ENCODE measurements at regions of chr4 and their contacts with region 1.

Region 1: GRCh38 chr4:162497564-162498167 is 333.9 kb upstream of the FSTL5 start:
- DNase-seq: peak; percentile 68
- H3K4me3 Mint-ChIP-seq: no peak overlapping the region
- H3K27ac Mint-ChIP-seq: no peak overlapping the region
- H3K4me1 Mint-ChIP-seq: no peaks in the 10 kb centered on the region
- H3K27me3 Mint-ChIP-seq: no peaks in the 10 kb centered on the region

Region 2: DNA sequence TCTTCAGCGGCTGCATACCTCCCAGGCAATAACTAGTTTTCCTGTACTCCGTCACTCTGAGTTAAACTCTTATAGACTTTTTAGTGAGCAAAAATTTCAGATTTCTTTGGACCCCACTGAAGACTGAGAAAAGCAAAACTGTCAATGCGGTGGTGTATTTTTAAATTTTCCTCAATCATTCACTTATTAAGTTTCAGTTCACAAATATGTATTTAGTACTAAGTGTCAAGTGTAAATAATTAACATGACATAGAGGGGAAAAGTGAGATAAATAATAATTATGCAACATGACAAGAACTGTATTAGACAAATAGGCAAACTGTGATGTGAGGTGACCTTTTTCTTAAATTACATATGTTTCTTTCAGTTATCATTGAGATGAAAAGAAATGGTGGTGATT is 544.6 kb after region 1 on chr4:
- intact Hi-C with region 1: loop called (anchors 2 kb)
- DNase-seq: no peak
- H3K4me3 Mint-ChIP-seq: no peak overlapping the region
- H3K27ac Mint-ChIP-seq: no peak overlapping the region
- H3K4me1 Mint-ChIP-seq: no peaks in the 10 kb centered on the region
- H3K27me3 Mint-ChIP-seq: peaks cover 2% of the 10 kb centered on the region

Region 3: GRCh38 chr4:163332500-163333406 is 835.1 kb after region 1 on chr4 and contains the start of gene NPY1R:
- intact Hi-C with region 1: loop called (anchors 1 kb)
- DNase-seq: peak; percentile 77
- H3K4me3 Mint-ChIP-seq: peak within 1 kb of the TSS; percentile 72
- H3K27ac Mint-ChIP-seq: no peak within 1 kb of the TSS
- H3K4me1 Mint-ChIP-seq: peaks cover 12% of the 10 kb centered on the region
- H3K27me3 Mint-ChIP-seq: peaks cover 49% of the 10 kb centered on the region
- total RNA-seq, gene NPY1R: not detected in 2 replicates

Region 4: GRCh38 chr4:163484906-163485305 is 987.2 kb after region 1 on chr4:
- intact Hi-C with region 1: loop called (anchors 10 kb)
- DNase-seq: peak; percentile 87
- H3K4me3 Mint-ChIP-seq: no peak overlapping the region
- H3K27ac Mint-ChIP-seq: no peak overlapping the region
- H3K4me1 Mint-ChIP-seq: peaks cover 4% of the 10 kb centered on the region
- H3K27me3 Mint-ChIP-seq: peaks cover 28% of the 10 kb centered on the region

Region 5: DNA sequence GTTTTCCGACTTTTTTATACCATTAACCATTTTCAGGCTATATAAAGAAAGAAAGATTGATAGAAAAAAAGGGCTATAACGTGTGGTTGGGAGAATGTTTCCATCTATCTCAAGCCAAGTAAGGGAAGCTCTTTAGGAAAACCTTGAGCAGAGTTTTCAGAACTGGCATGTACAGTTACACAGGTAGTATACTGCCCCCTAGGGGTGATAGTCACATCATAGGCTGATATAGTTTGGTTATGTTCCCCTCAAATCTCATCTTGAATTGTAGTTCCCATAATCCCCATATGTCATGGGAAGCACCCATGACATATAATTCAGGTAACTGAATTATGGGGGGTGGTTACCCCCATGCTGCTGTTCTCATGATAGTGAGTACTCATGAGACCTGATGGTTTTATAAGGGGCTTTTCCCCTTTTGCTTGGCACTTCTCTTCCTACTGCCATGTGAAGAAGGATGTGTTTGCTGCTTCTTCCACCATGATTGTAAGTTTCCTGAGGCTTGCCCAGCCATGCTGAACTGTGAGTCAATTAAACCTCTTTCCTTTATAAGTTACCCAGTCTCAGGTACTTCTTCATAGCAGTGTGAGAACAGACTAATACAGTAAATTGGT is 1183.6 kb after region 1 on chr4:
- intact Hi-C with region 1: loop called (anchors 5 kb)
- DNase-seq: peak; percentile 79
- H3K4me3 Mint-ChIP-seq: no peak overlapping the region
- H3K27ac Mint-ChIP-seq: no peak overlapping the region
- H3K4me1 Mint-ChIP-seq: no peaks in the 10 kb centered on the region
- H3K27me3 Mint-ChIP-seq: no peaks in the 10 kb centered on the region